Right cardiac atrium (tissue), 5 donors: ENCODE measurements at regions of chr2 and their contacts with region 1.

Region 1: DNA sequence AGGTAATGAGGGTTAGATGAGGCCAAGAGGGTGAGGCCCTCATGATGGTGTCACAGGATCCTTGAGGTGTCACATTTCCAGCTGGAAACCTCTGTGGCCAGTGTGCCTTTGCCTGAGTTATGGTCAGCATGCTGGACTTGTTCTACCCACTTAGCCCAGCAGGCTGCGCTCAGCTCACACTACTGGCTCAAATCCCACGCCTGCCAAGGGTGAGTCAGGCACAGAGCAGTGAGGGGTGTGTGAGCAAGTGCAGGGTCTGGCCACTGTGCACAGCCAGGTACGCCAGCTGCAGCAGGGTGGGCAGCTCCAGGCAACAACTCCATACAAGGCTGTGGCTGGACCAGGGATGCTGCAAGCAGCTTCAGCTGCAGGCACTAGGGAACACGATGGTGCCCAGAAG is 616.6 kb upstream of the FSHR start:
- DNase-seq: peak; percentile 24 to 54 (median 51)
- ATAC-seq: peak; percentile 69 to 71
- H3K4me3 ChIP-seq: no peak overlapping the region
- H3K27ac ChIP-seq: no peak overlapping the region
- H3K4me1 ChIP-seq: no peaks in the 10 kb centered on the region
- H3K27me3 ChIP-seq: no peaks in the 10 kb centered on the region

Region 2: GRCh38 chr2:49737606-49738005 is 33.3 kb before region 1 on chr2:
- intact Hi-C with region 1: no loop called
- DNase-seq: no peak
- ATAC-seq: no peak
- H3K4me3 ChIP-seq: no peak overlapping the region
- H3K27ac ChIP-seq: no peak overlapping the region
- H3K4me1 ChIP-seq: no peaks in the 10 kb centered on the region
- H3K27me3 ChIP-seq: no peaks in the 10 kb centered on the region

Region 3: DNA sequence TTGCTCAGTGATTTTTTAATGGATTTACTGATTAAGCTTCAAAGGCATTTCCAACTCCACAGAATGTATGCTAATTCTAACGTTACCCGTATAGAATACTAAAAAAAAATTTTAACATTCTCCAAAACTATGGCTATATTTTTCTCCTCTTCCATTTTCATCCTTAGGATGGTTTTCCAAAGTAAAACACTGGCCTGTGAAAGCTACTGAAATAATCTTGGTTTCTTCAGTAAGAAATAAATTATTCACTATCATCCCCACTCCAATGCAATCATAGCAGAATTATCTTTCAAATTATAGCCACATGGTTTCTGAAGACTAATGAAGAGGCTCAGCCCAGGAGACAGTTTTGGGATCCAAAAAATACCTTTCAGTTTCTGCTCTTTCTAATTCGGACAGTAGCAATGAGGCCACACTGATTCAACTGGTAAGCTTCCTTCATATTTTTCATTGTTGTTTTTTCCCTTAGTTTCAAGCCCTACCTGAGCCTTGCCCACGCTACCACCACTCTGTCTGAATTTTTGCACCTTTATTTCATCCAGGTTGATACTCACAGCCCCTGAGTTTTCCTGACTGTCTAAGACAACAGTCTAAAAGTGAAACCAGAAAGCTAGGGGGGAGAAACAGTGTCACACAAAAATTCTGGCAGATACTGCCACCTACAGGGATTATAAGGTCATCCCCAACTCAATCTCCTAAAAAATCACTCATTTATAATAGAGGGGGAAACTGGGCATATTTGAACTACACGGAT is 373.1 kb after region 1 on chr2:
- intact Hi-C with region 1: loop called in 2 of 4 experiments (anchors 5 to 10 kb)
- DNase-seq: no peak
- ATAC-seq: peak; percentile 70 to 81
- H3K4me3 ChIP-seq: peak overlapping the region; percentile 83
- H3K27ac ChIP-seq: peak overlapping the region; percentile 50
- H3K4me1 ChIP-seq: no peaks in the 10 kb centered on the region
- H3K27me3 ChIP-seq: no peaks in the 10 kb centered on the region